ENCODE measurements at regions of chr9 and their contacts with region 1.

Region 1: GRCh38 chr9:16585591-16585990 is 284.9 kb downstream of the BNC2 start:
- DNase-seq: no peak
- ATAC-seq: no peak
- H3K4me3 ChIP-seq: peak overlapping the region; percentile 29
- H3K27ac ChIP-seq: no peak overlapping the region
- H3K4me1 ChIP-seq: peaks cover 11% of the 10 kb centered on the region
- H3K27me3 ChIP-seq: no peaks in the 10 kb centered on the region
- CTCF ChIP-seq: no peak

Region 2: DNA sequence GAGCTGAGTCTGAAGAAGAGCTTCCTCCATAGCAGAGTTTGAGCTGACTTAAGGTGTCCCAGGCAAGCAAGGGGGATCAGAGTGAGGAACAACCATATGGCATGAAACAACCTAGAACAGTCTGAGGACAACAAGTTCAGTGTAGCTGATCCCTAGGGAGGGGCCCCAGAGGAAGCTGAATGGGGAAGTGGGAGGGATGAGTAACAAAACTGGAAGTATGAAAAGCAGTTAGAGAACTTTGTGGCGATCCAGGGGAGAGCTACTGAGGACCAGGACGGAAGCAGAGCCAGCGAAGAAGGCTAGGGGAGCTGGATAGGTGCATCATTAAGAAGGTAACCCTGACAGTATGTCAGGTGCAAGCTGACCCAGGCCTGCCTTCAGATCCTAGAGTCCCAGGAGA is 296.0 kb before region 1 on chr9:
- intact Hi-C with region 1: no loop called
- DNase-seq: no peak
- ATAC-seq: no peak
- H3K4me3 ChIP-seq: no peak overlapping the region
- H3K27ac ChIP-seq: no peak overlapping the region
- H3K4me1 ChIP-seq: no peaks in the 10 kb centered on the region
- H3K27me3 ChIP-seq: no peaks in the 10 kb centered on the region
- CTCF ChIP-seq: no peak

Region 3: DNA sequence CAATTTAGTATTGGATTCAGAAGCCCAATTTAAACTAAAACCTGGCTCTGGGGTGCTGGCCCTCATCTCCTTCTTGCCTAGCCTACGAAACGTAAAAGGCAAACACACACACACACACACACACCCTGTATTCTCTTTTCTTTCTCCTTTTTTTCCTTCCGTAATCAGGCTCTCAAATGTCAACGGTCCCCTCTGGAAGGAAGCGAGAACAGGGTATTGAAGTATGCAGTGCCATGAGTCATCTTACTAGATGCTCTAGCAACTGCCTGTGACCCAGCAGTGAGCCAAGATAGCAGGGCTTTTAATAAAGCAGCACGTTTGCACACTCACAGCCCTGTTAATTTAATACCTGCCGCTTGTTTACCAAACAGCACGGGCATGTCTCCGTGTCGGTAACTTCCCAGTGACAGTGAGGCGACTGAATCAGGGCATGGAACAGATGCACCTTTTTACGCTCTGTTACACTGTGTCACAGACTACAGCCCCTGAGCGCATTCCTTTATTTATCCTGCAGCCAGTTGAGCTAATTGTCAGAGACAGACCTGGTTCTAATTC is 41.1 kb after region 1 on chr9:
- intact Hi-C with region 1: loop called in 1 of 2 experiments (anchors 5 kb)
- DNase-seq: peak; percentile 18 to 72
- ATAC-seq: peak; percentile 93 to 96 (median 95)
- H3K4me3 ChIP-seq: peak overlapping the region; percentile 44
- H3K27ac ChIP-seq: peak overlapping the region; percentile 81
- H3K4me1 ChIP-seq: peaks cover 35% of the 10 kb centered on the region
- H3K27me3 ChIP-seq: no peaks in the 10 kb centered on the region
- CTCF ChIP-seq: no peak

Region 4: DNA sequence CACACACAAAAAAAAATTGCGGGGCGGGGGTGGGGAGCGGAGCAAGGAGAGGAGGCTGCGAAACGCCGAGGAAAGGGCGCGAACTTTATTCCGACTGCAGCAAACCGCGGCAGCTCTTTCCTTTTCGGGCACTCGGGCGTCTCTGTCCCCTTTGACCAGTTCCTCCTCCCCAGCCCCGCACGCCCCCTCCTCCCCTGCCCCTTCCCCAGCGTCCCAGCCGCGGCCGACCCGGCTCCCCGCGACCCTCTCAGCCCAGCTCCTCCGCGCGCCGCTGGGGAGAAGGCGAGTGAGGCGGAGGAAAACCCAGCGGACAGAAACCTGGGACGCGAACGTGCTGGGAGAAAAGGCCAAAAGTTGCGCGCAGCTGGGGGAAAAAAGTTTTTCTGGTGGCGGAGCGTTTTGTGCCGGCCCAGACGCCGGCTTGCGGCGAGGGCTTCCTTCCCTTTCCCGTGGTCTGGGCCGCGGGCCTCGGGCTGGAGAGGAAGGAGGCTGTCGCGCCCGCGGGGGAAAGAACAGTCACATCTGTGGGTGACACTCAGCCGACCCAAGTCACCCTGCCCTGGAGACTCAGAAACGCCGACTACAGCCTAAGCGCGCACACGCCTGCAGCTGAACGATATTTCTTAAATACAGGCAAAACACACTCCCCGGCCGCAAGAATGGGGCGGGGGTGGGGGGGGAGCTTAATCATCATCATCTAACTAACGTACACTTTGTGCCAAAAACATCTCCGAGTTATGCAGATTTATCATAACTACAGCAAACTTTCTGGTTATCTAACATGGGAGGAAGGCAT is 286.0 kb after region 1 on chr9:
- intact Hi-C with region 1: loop called in 1 of 2 experiments (anchors 5 kb)
- DNase-seq: peak; percentile 63 to 79
- ATAC-seq: peak; percentile 52 to 62 (median 60)
- H3K4me3 ChIP-seq: peak overlapping the region; percentile 87
- H3K27ac ChIP-seq: peak overlapping the region; percentile 82
- H3K4me1 ChIP-seq: peaks cover 9% of the 10 kb centered on the region
- H3K27me3 ChIP-seq: peaks cover 0 to 3% (median 0%) of the 10 kb centered on the region in 3 donors
- CTCF ChIP-seq: no peak

Region 5: GRCh38 chr9:17134396-17135294 is 549.1 kb after region 1 on chr9 and contains the start of gene CNTLN:
- intact Hi-C with region 1: no loop called
- DNase-seq: peak; percentile 95 to 97
- ATAC-seq: peak; percentile 92 to 97 (median 94)
- H3K4me3 ChIP-seq: peak within 1 kb of the TSS; percentile 91
- H3K27ac ChIP-seq: peak within 1 kb of the TSS; percentile 79
- H3K4me1 ChIP-seq: peaks cover 9% of the 10 kb centered on the region
- H3K27me3 ChIP-seq: no peaks in the 10 kb centered on the region
- CTCF ChIP-seq: no peak
- total RNA-seq, gene CNTLN: 1.4 to 2.4 (median 1.9) TPM

Measured in psoas muscle (tissue), 8 donors.